Prostate gland (tissue), 2 donors: ENCODE measurements at regions of chr1 and their contacts with region 1.

Region 1: GRCh38 chr1:197521118-197521739 is 253.2 kb downstream of the CRB1 start:
- DNase-seq: no peak
- H3K4me3 ChIP-seq: no peak overlapping the region
- H3K27ac ChIP-seq: no peak overlapping the region
- H3K4me1 ChIP-seq: no peaks in the 10 kb centered on the region
- H3K27me3 ChIP-seq: no peaks in the 10 kb centered on the region
- CTCF ChIP-seq: peak in 3 of 4 experiments; percentile 26 to 46 (median 40)
- POLR2A ChIP-seq: no peak

Region 2: GRCh38 chr1:197435224-197435623 is 86.0 kb before region 1 on chr1:
- intact Hi-C with region 1: no loop called
- DNase-seq: no peak
- H3K4me3 ChIP-seq: no peak overlapping the region
- H3K27ac ChIP-seq: no peak overlapping the region
- H3K4me1 ChIP-seq: no peaks in the 10 kb centered on the region
- H3K27me3 ChIP-seq: no peaks in the 10 kb centered on the region
- CTCF ChIP-seq: no peak
- POLR2A ChIP-seq: no peak

Region 3: DNA sequence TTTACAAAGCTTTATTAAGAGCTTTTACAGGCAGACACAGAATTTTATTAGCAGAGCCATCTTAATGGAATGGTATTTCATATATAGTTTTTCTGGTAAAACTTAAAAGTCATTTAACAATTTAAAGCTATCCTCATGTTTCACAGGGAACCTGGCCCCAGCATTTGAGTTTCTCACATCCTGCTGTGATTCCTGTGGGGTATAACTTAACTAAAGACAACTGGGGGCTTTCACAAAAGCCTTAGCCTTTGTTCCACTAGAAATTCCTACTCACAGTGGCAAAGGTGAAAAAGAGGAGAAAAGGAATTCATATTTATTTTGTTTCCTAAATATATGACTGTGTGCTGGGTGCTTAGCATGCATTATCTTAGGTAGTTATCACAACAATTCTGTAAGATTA is 20.2 kb after region 1 on chr1:
- intact Hi-C with region 1: no loop called
- DNase-seq: no peak
- H3K4me3 ChIP-seq: no peak overlapping the region
- H3K27ac ChIP-seq: no peak overlapping the region
- H3K4me1 ChIP-seq: no peaks in the 10 kb centered on the region
- H3K27me3 ChIP-seq: no peaks in the 10 kb centered on the region
- CTCF ChIP-seq: no peak
- POLR2A ChIP-seq: no peak

Region 4: DNA sequence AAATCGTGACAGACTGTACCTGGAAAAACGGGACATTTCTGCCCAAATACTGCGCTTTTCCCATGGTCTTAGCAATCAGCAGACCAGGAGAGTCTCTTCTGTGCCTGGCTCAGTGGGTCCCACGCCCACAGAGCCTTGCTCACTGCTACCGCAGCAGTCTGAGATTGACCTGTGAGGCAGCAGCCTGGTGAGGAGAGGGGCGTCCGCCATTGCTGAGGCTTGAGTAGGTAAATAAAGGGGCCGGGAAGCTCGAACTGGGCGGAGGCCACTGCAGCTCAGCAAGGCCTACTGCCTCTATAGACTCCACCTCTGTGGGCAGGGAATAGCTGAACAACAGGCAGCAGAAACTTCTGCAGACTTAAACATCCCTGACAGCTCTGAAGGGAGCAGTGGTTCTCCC is 50.9 kb after region 1 on chr1:
- intact Hi-C with region 1: no loop called
- DNase-seq: no peak
- H3K4me3 ChIP-seq: no peak overlapping the region
- H3K27ac ChIP-seq: no peak overlapping the region
- H3K4me1 ChIP-seq: no peaks in the 10 kb centered on the region
- H3K27me3 ChIP-seq: no peaks in the 10 kb centered on the region
- CTCF ChIP-seq: no peak
- POLR2A ChIP-seq: no peak

Region 5: DNA sequence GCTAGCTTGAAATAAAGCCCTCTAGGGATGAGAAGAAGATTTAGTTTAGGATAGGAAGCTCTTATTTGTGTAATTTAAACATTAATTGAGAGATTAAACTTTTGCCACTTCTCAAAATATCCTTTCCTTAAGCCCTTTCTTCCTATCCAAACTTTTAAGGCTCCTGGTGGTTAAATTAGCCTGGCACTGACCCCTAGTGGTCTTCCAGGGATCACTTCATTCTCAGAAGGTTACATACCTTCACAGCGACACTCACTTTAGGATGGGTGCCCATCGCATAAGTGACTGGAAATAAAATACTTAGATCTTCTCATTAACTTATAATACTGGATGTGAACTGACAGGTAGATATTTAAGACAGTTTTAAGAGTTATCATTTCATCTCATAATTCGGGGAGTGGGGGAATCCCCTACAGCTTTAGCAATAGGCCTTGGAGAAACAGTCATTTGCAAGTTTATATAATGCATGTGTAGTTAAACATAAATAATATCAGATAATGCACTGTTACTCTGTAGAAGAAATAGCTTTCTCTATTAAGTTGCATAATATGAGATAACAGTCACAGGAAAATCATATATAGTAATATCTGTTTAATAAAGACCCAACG is 403.4 kb after region 1 on chr1:
- intact Hi-C with region 1: loop called (anchors 10 kb)
- DNase-seq: peak; percentile 39
- H3K4me3 ChIP-seq: no peak overlapping the region
- H3K27ac ChIP-seq: no peak overlapping the region
- H3K4me1 ChIP-seq: no peaks in the 10 kb centered on the region
- H3K27me3 ChIP-seq: peaks cover 26% of the 10 kb centered on the region
- CTCF ChIP-seq: peak; percentile 24 to 62 (median 54)
- POLR2A ChIP-seq: no peak

Region 6: DNA sequence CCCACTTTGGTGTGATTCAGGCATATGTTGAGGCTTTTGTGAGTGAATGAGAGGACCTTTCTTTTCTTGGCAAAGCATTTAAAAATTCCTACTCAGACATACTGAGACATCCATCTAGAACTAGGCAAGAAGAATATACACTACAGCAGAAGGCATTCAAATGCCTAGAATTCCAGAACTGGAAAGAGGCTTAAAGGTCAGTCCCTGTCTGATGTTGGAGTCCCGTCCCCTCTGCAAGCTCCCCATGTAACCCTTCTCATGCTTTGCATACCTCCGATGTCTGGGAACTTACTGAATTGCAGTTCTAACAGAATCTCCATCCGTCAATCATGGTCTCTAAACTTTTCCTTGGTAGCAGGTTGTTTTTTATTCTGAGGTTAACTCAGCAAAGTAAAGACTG is 866.4 kb after region 1 on chr1:
- intact Hi-C with region 1: no loop called
- DNase-seq: no peak
- H3K4me3 ChIP-seq: no peak overlapping the region
- H3K27ac ChIP-seq: no peak overlapping the region
- H3K4me1 ChIP-seq: no peaks in the 10 kb centered on the region
- H3K27me3 ChIP-seq: no peaks in the 10 kb centered on the region
- CTCF ChIP-seq: no peak
- POLR2A ChIP-seq: no peak